ENCODE measurements at regions of chr4 and their contacts with region 1.

Region 1: GRCh38 chr4:145609481-145610427 is 9.4 kb upstream of the MMAA start:
- DNase-seq: peak; percentile 41
- H3K4me3 ChIP-seq: no peak overlapping the region; a peak in 1 of 4 replicates
- H3K27ac ChIP-seq: no peak overlapping the region
- H3K4me1 ChIP-seq: no peaks in the 10 kb centered on the region
- H3K27me3 ChIP-seq: no peaks in the 10 kb centered on the region
- CTCF ChIP-seq: peak; percentile 91
- EP300 ChIP-seq: no peak
- RAD21 ChIP-seq: peak; percentile 95

Region 2: DNA sequence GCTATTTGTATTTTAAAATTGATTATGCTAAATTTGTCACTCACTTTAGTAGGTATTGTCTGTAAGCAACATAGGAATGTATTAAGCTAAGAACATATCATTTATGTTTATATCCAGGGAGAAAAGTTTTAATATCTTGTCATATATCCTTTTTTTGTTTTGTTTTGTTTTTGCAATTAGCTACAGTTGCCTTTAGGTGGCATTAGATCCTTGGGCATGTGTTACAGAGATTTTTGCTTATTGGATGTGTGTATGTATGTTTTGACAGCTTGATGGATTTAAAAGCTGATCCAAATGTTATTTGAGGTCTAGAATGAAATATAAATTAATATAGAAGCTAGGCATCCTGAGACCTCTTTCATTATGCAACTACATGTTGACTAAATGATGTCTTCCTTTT is 393.2 kb before region 1 on chr4:
- CTCF ChIA-PET with region 1: interaction called, 20 read pairs
- POLR2A ChIA-PET with region 1: no interaction called
- DNase-seq: peak; percentile 13
- H3K4me3 ChIP-seq: no peak overlapping the region; a peak in 1 of 4 replicates
- H3K27ac ChIP-seq: no peak overlapping the region
- H3K4me1 ChIP-seq: no peaks in the 10 kb centered on the region; a peak in 1 of 4 replicates
- H3K27me3 ChIP-seq: no peaks in the 10 kb centered on the region
- CTCF ChIP-seq: peak; percentile 82
- EP300 ChIP-seq: no peak
- RAD21 ChIP-seq: peak; percentile 84

Measured in SK-N-SH (cell line).